Activated CD4-positive, alpha-beta T cell treated with anti-CD3 and anti-CD28 coated beads for 36 hours (primary cell): ENCODE measurements at regions of chr1 and their contacts with region 1.

Region 1: GRCh38 chr1:17059739-17060460 is 6.1 kb upstream of the SDHB start:
- DNase-seq: peak; percentile 65
- ATAC-seq: peak; percentile 84
- H3K4me3 Mint-ChIP-seq: no peak overlapping the region
- H3K27ac Mint-ChIP-seq: no peak overlapping the region
- H3K4me1 Mint-ChIP-seq: no peaks in the 10 kb centered on the region
- H3K27me3 Mint-ChIP-seq: peaks cover 3% of the 10 kb centered on the region

Region 2: DNA sequence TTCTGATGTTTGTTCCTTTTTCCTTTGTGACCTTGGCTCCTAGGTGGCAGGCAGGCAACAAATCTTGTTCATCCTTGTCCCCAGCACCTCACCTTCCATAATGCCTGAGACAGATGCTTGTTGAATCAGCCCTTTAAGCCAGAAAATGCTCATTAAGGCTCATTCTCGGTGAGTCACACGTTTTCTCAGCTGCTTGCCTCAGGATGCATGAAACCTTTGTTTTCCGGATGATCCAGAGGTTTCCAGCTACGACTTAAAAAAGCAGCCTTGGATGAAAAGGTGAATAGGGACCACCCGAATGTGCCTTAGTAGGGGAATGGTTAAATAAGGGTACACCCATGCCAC is 43.6 kb before region 1 on chr1:
- CTCF ChIA-PET with region 1: no interaction called
- POLR2A ChIA-PET with region 1: no interaction called
- intact Hi-C with region 1: no loop called
- DNase-seq: no peak
- ATAC-seq: no peak
- H3K4me3 Mint-ChIP-seq: no peak overlapping the region
- H3K27ac Mint-ChIP-seq: no peak overlapping the region
- H3K4me1 Mint-ChIP-seq: peaks cover 13% of the 10 kb centered on the region
- H3K27me3 Mint-ChIP-seq: no peaks in the 10 kb centered on the region

Region 3: DNA sequence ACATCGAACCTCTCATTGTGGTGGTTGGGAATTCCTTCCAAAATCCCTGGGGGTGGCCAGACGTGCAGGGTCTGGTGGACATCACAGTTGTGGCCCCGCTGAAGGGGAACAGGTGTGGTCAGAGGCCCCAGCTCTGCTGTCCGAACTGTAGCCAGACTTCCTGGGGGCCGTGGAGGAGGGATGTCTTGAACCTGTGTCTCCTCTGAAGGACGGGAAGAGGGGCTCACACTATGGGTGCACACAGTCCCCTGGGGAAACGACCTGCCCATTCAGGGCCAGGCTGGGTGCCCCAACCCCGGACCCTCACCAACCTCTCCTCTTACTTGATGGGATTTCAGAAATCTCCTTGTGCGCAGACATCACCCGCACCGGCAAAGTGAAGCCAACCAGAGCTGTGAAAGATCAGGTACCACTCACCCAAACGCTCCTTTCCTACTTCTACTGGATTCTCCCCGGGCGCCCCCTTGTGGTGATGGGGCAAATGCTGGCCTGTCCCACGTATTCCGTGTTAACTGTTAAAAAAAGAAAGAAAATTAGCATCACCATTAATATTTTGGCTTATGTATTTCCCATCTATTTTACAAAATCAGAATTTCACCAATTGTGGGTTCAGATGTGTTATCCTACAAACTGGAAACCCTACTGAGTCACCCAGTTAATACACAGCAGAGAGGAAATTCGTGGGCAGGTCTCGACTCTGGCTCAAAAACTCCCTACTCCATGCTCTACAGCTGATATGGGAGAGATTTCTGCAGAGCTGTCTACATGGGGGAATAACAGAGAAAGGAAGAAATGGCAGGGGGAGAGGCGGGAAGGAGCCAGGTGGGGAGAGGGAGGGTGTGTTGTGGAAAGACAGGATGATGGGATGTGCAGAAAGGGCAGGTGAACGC is 276.2 kb after region 1 on chr1:
- CTCF ChIA-PET with region 1: no interaction called
- POLR2A ChIA-PET with region 1: no interaction called
- intact Hi-C with region 1: loop called in 1 of 2 experiments (anchors 2 kb)
- DNase-seq: peak; percentile 86
- ATAC-seq: peak; percentile 55
- H3K4me3 Mint-ChIP-seq: no peak overlapping the region
- H3K27ac Mint-ChIP-seq: no peak overlapping the region
- H3K4me1 Mint-ChIP-seq: peaks cover 1% of the 10 kb centered on the region
- H3K27me3 Mint-ChIP-seq: peaks cover 8% of the 10 kb centered on the region